Keratinocyte (primary cell): ENCODE measurements at regions of chr5 and their contacts with region 1.

Region 1: DNA sequence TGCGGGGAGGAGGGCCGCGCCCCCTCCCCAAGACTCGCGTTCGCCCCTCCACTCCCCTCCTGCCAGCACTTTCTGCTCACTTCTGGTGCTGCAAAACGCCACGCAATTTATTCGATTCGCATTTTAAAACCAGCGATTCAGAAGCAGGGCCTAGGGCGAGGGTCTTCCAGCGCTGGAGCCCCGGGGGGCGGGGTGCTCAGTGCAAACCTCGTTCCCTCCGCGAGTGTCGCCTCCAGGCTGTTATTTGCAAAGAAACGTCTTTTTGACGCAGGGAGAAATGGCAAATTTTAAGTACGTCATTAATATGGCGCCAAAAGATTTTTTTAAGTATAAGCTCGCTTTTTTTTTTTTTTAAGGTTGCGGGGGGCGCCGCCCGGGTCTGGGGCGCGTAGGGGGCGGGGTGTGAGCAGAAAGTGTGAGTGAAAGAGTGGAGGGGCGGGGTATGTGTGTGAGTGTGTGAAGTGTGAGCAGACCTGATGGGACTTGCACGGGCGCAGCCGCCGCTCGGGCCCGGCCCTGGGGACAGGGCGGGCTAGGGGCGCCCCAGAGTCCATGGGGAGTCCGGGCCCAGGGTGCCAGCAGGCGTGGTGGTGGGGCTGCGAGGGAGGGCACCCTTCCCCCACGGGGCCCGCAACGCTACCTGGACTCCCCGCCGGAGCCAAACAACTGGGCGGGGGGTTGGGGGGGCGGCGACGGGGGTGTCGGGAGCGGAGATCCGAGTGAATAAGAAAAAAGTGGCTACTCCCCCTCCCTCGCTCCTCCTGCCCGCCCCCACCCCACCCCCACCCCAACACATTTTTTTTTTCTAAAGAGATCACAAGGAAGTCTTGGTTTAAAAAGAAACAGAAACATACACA is at the start of gene JADE2:
- DNase-seq: no peak
- H3K4me3 ChIP-seq: peak within 1 kb of the TSS; percentile 57 to 94 (median 85)
- H3K27ac ChIP-seq: peak within 1 kb of the TSS; percentile 77
- H3K4me1 ChIP-seq: peaks cover 19% of the 10 kb centered on the region
- H3K27me3 ChIP-seq: no peaks in the 10 kb centered on the region
- CTCF ChIP-seq: no peak
- polyA plus RNA-seq, gene JADE2: 8.4 to 15.5 TPM (median 11.1 TPM) in 3 replicates

Region 2: DNA sequence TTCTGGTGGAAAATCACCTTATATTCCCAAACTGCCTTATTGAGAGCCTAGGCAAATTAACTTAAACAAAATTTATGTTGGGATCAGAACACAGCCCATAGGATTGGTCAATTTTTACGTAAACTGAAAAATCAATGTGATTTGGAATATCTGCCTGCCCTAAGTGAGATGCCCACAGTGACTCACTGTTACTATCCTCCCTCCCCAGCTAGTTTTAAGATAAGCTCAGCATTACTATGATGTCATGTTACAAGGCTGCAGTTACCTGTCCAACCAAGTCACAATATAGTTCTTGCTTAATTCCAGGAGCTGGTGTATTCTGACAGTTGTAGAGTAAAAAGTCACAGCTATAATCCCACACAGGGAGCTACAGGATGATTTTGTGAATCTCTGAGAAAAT is 371.4 kb before region 1 on chr5:
- dilution Hi-C with region 1: no loop called
- DNase-seq: no peak
- H3K4me3 ChIP-seq: no peak overlapping the region
- H3K27ac ChIP-seq: no peak overlapping the region
- H3K4me1 ChIP-seq: no peaks in the 10 kb centered on the region
- H3K27me3 ChIP-seq: no peaks in the 10 kb centered on the region
- CTCF ChIP-seq: no peak

Region 3: GRCh38 chr5:134406390-134406789 is 118.7 kb before region 1 on chr5:
- dilution Hi-C with region 1: loop called (anchors 5 kb)
- DNase-seq: no peak
- H3K4me3 ChIP-seq: no peak overlapping the region
- H3K27ac ChIP-seq: no peak overlapping the region
- H3K4me1 ChIP-seq: peaks cover 29% of the 10 kb centered on the region
- H3K27me3 ChIP-seq: no peaks in the 10 kb centered on the region
- CTCF ChIP-seq: no peak

Region 4: DNA sequence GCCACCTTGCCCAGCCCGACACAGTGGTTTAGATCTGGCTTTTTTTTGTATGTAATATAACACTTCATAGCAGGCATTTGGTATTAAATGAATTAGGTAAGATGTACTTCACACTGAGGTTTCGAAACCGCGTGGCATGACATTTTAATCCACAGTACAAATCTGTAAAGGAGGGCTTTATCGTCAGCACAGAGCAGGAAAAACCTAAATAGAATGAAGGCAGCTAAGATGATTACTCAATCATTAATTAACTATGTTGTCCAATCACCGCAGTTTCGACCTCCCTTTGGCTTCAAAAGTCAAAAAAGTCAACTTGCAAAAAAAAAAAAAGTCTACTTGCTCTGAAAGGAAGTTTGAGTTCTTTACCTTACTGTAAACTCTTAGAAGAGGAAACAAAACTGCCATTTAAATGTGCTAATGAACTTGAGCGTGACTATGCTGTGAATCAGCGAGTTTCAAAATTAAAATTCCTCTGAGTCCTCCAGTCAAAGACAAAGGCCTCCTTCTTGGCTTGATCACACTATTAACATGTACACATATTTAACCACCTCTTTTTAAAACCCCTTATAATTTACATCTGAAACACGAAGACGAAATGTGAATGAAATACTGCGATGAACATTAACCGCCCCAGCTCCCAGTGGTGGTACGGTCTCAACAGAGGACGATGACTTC is 122.8 kb after region 1 on chr5:
- dilution Hi-C with region 1: no loop called
- DNase-seq: no peak
- H3K4me3 ChIP-seq: peak overlapping the region; percentile 95 to 98 (median 97)
- H3K27ac ChIP-seq: peak overlapping the region; percentile 99
- H3K4me1 ChIP-seq: peaks cover 11% of the 10 kb centered on the region
- H3K27me3 ChIP-seq: no peaks in the 10 kb centered on the region
- CTCF ChIP-seq: no peak